ENCODE measurements at regions of chr4 and their contacts with region 1.

Region 1: GRCh38 chr4:94757192-94758139 is at the start of gene BMPR1B:
- DNase-seq: peak in 1 of 5 donors; percentile 61
- ATAC-seq: peak in 3 of 4 donors; percentile 44 to 67 (median 52)
- H3K4me3 ChIP-seq: peak within 1 kb of the TSS; percentile 32 to 60 (median 49)
- H3K27ac ChIP-seq: peak within 1 kb of the TSS in 2 of 12 donors; percentile 13 to 34
- H3K4me1 ChIP-seq: peaks cover 0 to 15% (median 4%) of the 10 kb centered on the region in 12 donors
- H3K27me3 ChIP-seq: peaks cover 0 to 70% (median 35%) of the 10 kb centered on the region in 9 donors
- CTCF ChIP-seq: no peak
- POLR2A ChIP-seq: no peak
- total RNA-seq, gene BMPR1B: 1.1 to 7.6 (median 3.8) TPM

Region 2: DNA sequence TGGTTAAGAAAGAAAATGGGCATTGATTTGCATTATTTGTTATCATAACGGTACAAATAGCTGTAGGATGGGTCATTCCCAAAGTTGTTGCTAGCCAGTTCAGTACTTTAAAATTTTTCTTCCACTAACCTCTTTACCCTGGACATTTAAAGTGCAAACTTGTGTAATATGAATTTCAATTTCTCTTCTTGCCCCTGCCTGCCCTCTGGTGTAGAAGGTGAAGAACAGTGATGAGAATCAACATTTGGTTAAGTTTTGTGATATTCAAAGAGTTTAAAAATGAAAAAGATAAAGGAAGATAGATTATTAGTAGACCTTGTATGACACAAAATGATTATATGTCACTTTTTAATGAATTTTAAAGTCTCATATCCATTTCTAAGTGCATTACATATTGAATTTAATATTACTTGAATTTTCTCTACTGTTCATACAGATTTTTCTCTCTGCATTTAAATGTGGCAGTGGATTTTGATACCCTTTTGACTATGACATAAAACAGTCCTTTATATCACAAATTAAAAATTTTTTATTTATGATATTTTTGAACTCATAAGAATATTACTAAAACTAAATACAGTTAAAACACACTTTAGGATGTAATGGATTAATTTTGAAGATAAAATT is 338.0 kb after region 1 on chr4:
- intact Hi-C with region 1: loop called in 1 of 10 experiments (anchors 10 kb)
- DNase-seq: no peak
- ATAC-seq: peak in 2 of 4 donors; percentile 53 to 59
- H3K4me3 ChIP-seq: no peak overlapping the region
- H3K27ac ChIP-seq: no peak overlapping the region
- H3K4me1 ChIP-seq: no peaks in the 10 kb centered on the region
- H3K27me3 ChIP-seq: peaks cover 0 to 3% (median 0%) of the 10 kb centered on the region in 9 donors
- CTCF ChIP-seq: peak in 10 of 12 donors; percentile 25 to 64 (median 48)
- POLR2A ChIP-seq: no peak

Region 3: DNA sequence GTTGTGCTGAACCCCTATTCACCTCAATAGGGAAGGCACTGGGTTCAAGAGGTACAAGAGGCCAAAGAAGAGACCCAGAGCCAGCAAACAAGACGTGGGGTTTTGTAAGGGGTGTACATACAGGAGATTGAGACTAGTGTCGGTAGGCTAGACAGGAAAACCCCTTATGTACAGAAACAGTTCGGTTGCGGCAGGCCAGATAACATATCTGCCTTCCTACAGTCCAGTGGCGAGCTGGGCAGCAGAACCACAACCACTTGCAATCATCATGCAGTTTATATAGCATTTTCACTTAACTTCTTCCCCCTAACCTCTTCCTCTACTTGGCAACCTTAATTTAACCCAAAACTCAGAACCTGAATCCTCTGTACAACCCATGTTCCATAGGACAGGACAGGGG is 1504.6 kb after region 1 on chr4:
- intact Hi-C with region 1: no loop called
- DNase-seq: no peak
- ATAC-seq: no peak
- H3K4me3 ChIP-seq: no peak overlapping the region
- H3K27ac ChIP-seq: no peak overlapping the region
- H3K4me1 ChIP-seq: no peaks in the 10 kb centered on the region
- H3K27me3 ChIP-seq: no peaks in the 10 kb centered on the region
- CTCF ChIP-seq: no peak
- POLR2A ChIP-seq: no peak

Measured in heart left ventricle (tissue), 16 donors.